ENCODE measurements at regions of chr12 and their contacts with region 1.

Region 1: GRCh38 chr12:779745-780734 is 27.7 kb downstream of the WNK1 start:
- DNase-seq: no peak
- H3K4me3 ChIP-seq: peak overlapping the region in 1 of 2 donors; percentile 16
- H3K4me3 Mint-ChIP-seq: peak overlapping the region; percentile 78 to 94 (median 83)
- H3K27ac ChIP-seq: peak overlapping the region; percentile 16
- H3K27ac Mint-ChIP-seq: peak overlapping the region; percentile 76 to 93 (median 82)
- H3K4me1 ChIP-seq: peaks cover 81% of the 10 kb centered on the region
- H3K4me1 Mint-ChIP-seq: peaks cover 53 to 78% (median 64%) of the 10 kb centered on the region in 4 donors
- H3K27me3 ChIP-seq: no peaks in the 10 kb centered on the region
- H3K27me3 Mint-ChIP-seq: no peaks in the 10 kb centered on the region

Region 2: DNA sequence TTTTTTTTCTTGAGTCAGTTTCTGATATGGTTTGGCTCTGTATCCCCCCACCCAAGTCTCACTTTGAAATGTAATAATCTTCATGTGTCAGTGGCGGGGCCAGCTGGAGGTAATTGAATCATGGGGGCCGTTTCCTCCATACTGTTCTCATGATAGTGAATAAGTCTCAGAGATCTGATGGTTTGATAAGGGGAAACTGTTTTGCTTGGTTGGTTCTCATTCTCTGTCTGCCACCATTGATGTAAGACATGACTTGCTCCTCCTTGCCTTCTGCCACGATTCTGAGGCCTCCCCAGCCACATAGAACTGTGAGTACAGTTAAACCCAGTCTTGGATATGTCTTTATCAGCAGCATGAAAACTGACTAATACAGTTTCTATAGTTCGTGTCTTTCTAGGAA is 15.3 kb after region 1 on chr12:
- CTCF ChIA-PET with region 1: interaction called, 8 read pairs
- POLR2A ChIA-PET with region 1: interaction called, 6 read pairs
- intact Hi-C with region 1: loop called (anchors 2 kb)
- DNase-seq: peak; percentile 27 to 70 (median 37)
- H3K4me3 ChIP-seq: no peak overlapping the region
- H3K4me3 Mint-ChIP-seq: peak overlapping the region in 7 of 8 donors; percentile 48 to 69 (median 52)
- H3K27ac ChIP-seq: no peak overlapping the region
- H3K27ac Mint-ChIP-seq: peak overlapping the region; percentile 43 to 88 (median 83)
- H3K4me1 ChIP-seq: peaks cover 75% of the 10 kb centered on the region
- H3K4me1 Mint-ChIP-seq: peaks cover 49 to 84% (median 68%) of the 10 kb centered on the region in 4 donors
- H3K27me3 ChIP-seq: no peaks in the 10 kb centered on the region
- H3K27me3 Mint-ChIP-seq: no peaks in the 10 kb centered on the region

Region 3: DNA sequence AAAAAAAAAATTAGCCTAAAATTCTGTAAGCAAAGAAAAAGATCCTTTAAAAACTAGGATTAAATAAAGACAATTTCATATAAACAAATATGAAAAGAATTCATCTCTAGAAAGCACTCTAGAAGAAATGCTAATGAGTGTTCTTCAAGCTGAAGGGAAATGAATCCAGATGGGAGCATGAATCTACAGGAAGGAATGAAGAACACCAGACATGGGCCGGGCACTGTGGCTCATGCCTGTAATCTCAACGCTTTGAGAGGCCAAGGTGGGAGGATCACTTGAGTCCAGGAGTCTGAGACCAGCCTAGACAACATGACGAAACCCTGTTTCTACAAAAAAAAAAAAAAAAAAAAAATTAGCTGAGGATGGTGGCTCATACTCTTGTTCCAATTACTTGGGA is 517.2 kb after region 1 on chr12:
- CTCF ChIA-PET with region 1: no interaction called
- POLR2A ChIA-PET with region 1: no interaction called
- intact Hi-C with region 1: no loop called
- DNase-seq: no peak
- H3K4me3 ChIP-seq: no peak overlapping the region
- H3K4me3 Mint-ChIP-seq: no peak overlapping the region
- H3K27ac ChIP-seq: no peak overlapping the region
- H3K27ac Mint-ChIP-seq: no peak overlapping the region
- H3K4me1 ChIP-seq: no peaks in the 10 kb centered on the region
- H3K4me1 Mint-ChIP-seq: peaks cover 0 to 6% (median 0%) of the 10 kb centered on the region in 4 donors
- H3K27me3 ChIP-seq: no peaks in the 10 kb centered on the region
- H3K27me3 Mint-ChIP-seq: no peaks in the 10 kb centered on the region